ENCODE measurements at regions of chr10 and their contacts with region 1.

Region 1: GRCh38 chr10:68901104-68901927 is at the start of gene DDX50:
- DNase-seq: peak; percentile 99
- H3K4me3 ChIP-seq: peak within 1 kb of the TSS; percentile 72 to 96 (median 76)
- H3K27ac ChIP-seq: peak within 1 kb of the TSS; percentile 95 to 99 (median 98)
- H3K4me1 ChIP-seq: peaks cover 18 to 47% (median 44%) of the 10 kb centered on the region in 4 donors
- H3K27me3 ChIP-seq: no peaks in the 10 kb centered on the region
- CTCF ChIP-seq: peak in 2 of 3 experiments; percentile 21 to 27
- EP300 ChIP-seq: no peak
- POLR2A ChIP-seq: peak; percentile 66
- total RNA-seq, gene DDX50: 33.0 to 49.6 (median 47.4) TPM

Region 2: DNA sequence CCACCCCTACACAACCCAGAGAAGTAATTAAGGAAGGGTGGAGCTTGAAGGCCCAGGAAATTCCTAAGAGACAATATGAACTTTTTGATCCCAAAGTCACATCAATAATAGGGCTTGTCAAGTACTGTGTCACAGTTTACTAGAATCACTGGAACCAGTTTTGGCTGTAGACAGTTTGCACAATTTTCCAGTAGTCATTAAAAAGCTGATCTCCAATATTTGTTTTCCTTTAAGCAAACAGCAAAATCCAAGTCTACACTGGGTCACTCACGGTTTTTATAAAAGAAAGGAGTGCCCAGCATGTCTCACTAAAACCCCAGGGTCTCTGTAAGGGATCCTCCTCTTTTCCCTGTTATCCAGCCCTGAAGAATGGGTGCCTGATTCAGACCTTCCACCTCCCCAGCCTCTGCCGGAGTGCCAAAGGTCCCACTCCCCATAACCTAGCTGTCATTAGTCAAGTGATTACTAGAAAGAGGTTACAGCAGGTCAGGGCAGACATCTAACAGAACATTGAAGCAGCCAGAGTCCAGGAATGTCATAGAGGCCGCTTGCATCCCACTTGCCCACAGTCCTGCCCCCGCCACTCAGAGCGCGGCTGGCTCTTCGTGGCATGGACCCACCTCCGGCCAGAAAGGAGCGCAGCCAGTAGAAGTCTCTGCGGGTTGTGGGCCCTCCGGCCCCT is 374.5 kb before region 1 on chr10:
- intact Hi-C with region 1: loop called (anchors 5 kb)
- DNase-seq: no peak
- H3K4me3 ChIP-seq: peak overlapping the region; percentile 77 to 99 (median 92)
- H3K27ac ChIP-seq: peak overlapping the region; percentile 91 to 98 (median 94)
- H3K4me1 ChIP-seq: peaks cover 4 to 19% (median 16%) of the 10 kb centered on the region in 4 donors
- H3K27me3 ChIP-seq: no peaks in the 10 kb centered on the region
- CTCF ChIP-seq: no peak
- EP300 ChIP-seq: no peak
- POLR2A ChIP-seq: no peak

Region 3: DNA sequence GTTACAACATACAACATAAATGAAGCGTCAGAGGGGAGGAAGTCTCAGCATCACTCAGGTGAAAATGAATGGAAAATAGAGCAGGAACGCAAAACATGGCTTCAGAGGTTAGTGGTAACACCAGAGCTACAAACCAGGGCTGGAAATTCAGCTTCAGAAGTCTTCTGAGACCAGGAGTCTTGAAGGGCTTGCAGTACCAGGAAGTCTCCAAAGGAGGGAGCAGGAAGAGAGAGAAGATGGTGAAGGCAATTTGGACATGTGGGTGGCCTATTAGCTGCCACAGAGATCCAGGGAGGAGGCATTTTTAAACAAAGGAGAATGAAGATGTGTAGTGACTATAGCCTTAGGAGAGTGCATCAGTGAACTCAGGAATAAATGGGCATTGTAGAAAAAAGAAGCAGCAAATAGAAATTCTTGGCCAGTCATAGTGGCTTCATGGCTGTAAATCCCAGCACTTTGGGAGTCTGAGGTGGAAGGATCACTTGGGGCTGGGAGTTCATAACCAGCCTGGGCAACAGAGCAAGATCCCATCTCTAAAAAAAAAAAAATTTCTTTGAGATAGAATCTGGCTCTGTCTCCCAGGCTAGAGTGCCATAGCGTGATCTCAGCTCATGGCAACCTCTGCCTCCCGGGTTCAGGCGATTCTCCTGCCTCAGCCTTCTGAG is 350.4 kb before region 1 on chr10:
- intact Hi-C with region 1: loop called (anchors 5 kb)
- DNase-seq: no peak
- H3K4me3 ChIP-seq: no peak overlapping the region
- H3K27ac ChIP-seq: no peak overlapping the region
- H3K4me1 ChIP-seq: peaks cover 0 to 3% (median 0%) of the 10 kb centered on the region in 4 donors
- H3K27me3 ChIP-seq: no peaks in the 10 kb centered on the region
- CTCF ChIP-seq: peak; percentile 74 to 90 (median 86)
- EP300 ChIP-seq: no peak
- POLR2A ChIP-seq: no peak

Region 4: DNA sequence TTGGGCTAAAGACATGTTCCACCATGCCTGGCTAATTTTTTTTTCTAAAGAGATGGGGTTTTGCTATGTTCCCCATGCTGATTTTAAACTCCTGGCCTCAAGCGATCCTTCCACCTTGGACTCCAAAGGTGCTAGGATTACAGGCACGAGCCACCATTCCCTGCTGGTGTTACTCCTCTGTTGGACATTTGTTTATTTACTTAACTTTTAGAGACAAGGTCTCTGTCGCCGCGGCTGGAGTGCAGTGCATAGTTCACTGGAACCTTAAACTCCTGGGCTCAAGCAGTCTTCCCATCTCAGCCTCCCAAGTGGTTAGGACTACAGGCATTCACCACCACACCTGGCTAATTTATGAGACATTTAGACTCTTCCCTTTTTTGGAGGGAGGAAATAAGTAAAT is 141.3 kb before region 1 on chr10:
- intact Hi-C with region 1: loop called (anchors 10 kb)
- DNase-seq: no peak
- H3K4me3 ChIP-seq: no peak overlapping the region
- H3K27ac ChIP-seq: no peak overlapping the region
- H3K4me1 ChIP-seq: no peaks in the 10 kb centered on the region
- H3K27me3 ChIP-seq: no peaks in the 10 kb centered on the region
- CTCF ChIP-seq: no peak
- EP300 ChIP-seq: no peak
- POLR2A ChIP-seq: no peak

Region 5: GRCh38 chr10:68792115-68792514 is 109.2 kb before region 1 on chr10:
- intact Hi-C with region 1: loop called (anchors 5 kb)
- DNase-seq: no peak
- H3K4me3 ChIP-seq: no peak overlapping the region
- H3K27ac ChIP-seq: no peak overlapping the region
- H3K4me1 ChIP-seq: no peaks in the 10 kb centered on the region
- H3K27me3 ChIP-seq: no peaks in the 10 kb centered on the region
- CTCF ChIP-seq: peak in 1 of 3 experiments; percentile 18
- EP300 ChIP-seq: no peak
- POLR2A ChIP-seq: no peak

Region 6: DNA sequence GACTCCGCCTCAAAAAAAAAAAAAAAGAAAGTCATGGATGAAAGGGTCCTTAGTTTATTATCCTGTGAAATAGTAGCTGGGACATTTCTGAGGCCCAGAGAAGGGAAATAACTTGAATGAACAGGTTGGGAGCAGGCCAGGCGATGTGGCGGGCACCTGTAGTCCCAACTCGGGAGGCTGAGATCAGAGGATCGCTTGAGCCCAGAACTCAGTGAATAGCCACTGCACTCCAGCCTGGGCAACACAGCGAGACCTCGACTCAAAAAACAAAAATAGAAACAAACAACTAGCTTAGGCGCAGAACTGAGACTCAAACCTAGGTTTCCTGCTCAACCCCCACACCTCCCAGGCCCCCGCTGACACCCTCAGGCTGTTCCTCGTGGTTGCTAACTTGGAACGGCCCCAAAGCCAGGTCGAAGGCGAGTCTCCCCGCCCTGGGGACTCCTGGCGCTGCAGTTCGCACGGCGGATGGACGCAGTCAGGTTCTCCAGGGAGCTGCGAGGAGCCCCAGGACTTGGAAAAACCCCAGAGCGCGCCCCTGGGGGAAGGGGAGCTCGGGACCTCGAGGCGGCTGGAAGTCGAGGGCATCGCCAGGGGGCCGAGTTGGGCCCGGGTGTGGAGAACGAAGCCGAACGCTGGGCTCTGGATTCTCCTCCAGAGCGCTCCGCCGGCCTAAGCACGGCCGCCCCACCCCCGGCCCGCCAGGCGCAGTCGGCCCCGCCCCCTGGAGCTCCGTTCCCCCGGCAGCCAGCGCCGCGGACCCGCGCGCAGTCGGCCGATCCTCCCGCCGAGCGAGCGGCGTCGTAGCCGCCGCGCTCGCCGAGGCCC is 74.3 kb before region 1 on chr10 and contains the start of gene STOX1:
- intact Hi-C with region 1: loop called (anchors 2 kb)
- DNase-seq: no peak
- H3K4me3 ChIP-seq: peak within 1 kb of the TSS; percentile 58 to 70 (median 67)
- H3K27ac ChIP-seq: peak within 1 kb of the TSS; percentile 45 to 73 (median 69)
- H3K4me1 ChIP-seq: peaks cover 0 to 19% (median 16%) of the 10 kb centered on the region in 4 donors
- H3K27me3 ChIP-seq: no peaks in the 10 kb centered on the region
- CTCF ChIP-seq: peak in 1 of 3 experiments; percentile 22
- EP300 ChIP-seq: no peak
- POLR2A ChIP-seq: no peak
- total RNA-seq, gene STOX1: 3.0 to 13.6 (median 10.0) TPM